ENCODE measurements at regions of chr1 and their contacts with region 1.

Region 1: DNA sequence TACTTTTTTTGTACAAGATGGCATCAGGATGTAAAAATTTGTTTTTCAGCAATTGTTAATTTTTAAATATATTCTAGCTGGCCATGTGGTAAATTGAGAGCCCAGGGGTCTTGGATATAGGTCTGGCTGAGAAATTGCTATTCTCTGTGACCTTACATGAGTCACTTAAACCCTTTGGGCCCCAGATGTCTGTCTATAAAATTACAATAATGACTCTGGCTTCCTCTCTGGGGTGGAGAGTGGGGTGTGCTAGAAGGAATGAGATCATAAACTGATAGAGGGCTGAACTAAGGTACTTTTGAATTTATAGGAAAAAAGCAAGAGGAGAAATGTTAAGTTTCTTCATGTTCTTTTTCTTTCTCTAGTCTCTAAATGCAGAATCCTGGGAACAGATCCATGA is 12.4 kb upstream of the TCHH start:
- DNase-seq: no peak
- H3K4me3 ChIP-seq: no peak overlapping the region
- H3K27ac ChIP-seq: no peak overlapping the region
- H3K4me1 ChIP-seq: no peaks in the 10 kb centered on the region
- H3K27me3 ChIP-seq: peaks cover 0 to 72% (median 0%) of the 10 kb centered on the region in 4 donors
- CTCF ChIP-seq: no peak
- POLR2A ChIP-seq: no peak

Region 2: DNA sequence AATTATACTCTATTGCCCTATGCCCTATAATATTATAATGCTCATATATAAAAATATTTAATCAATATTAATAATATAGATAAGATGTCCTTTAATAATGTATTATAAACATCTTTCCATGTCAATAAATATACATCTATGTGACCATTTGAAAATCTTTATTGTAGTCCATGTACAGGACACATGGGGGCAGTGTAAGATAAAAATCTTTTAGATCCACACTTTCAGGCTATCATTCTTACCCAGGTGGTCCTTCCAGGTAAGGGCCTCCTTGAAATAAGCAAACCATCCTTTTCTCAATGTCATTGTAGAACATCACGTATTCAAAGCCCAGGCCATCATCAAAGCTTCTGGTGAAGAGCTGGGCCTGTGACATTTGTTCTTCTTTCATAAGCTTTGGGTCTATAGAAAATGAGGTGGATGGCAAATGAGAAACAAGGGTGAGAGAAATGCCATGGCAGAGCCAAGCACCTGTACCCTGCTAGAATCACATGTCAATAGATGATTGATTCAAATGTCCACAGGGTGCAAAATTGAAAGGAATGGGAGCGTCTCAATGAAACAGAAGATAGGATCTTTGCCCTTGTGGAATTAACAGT is 238.6 kb before region 1 on chr1:
- intact Hi-C with region 1: no loop called
- DNase-seq: no peak
- H3K4me3 ChIP-seq: no peak overlapping the region
- H3K27ac ChIP-seq: no peak overlapping the region
- H3K4me1 ChIP-seq: peaks cover 0 to 28% (median 0%) of the 10 kb centered on the region in 3 donors
- H3K27me3 ChIP-seq: no peaks in the 10 kb centered on the region
- CTCF ChIP-seq: peak in 4 of 6 experiments; percentile 24 to 54 (median 34)
- POLR2A ChIP-seq: no peak

Region 3: GRCh38 chr1:152061952-152062351 is 65.7 kb before region 1 on chr1:
- intact Hi-C with region 1: loop called (anchors 10 kb)
- DNase-seq: no peak
- H3K4me3 ChIP-seq: no peak overlapping the region
- H3K27ac ChIP-seq: no peak overlapping the region
- H3K4me1 ChIP-seq: no peaks in the 10 kb centered on the region
- H3K27me3 ChIP-seq: peaks cover 0 to 61% (median 0%) of the 10 kb centered on the region in 4 donors
- CTCF ChIP-seq: no peak
- POLR2A ChIP-seq: no peak

Region 4: GRCh38 chr1:152185544-152186391 is 58.1 kb after region 1 on chr1:
- intact Hi-C with region 1: no loop called
- DNase-seq: no peak
- H3K4me3 ChIP-seq: no peak overlapping the region
- H3K27ac ChIP-seq: peak overlapping the region; percentile 7 to 68 (median 64)
- H3K4me1 ChIP-seq: peaks cover 26 to 92% (median 35%) of the 10 kb centered on the region in 3 donors
- H3K27me3 ChIP-seq: peaks cover 0 to 6% (median 0%) of the 10 kb centered on the region in 4 donors
- CTCF ChIP-seq: peak; percentile 44 to 91 (median 88)
- POLR2A ChIP-seq: no peak